Naive thymus-derived CD4-positive, alpha-beta T cell (primary cell): ENCODE measurements at regions of chr7 and their contacts with region 1.

Region 1: GRCh38 chr7:105336009-105336408 is 52.7 kb downstream of the SRPK2 start:
- DNase-seq: peak in 3 of 9 donors; percentile 17 to 31 (median 17)
- ATAC-seq: no peak
- H3K4me3 ChIP-seq: no peak overlapping the region
- H3K4me3 Mint-ChIP-seq: no peak overlapping the region
- H3K27ac ChIP-seq: no peak overlapping the region
- H3K27ac Mint-ChIP-seq: no peak overlapping the region
- H3K4me1 ChIP-seq: peaks cover 0 to 6% of the 10 kb centered on the region in 2 donors
- H3K4me1 Mint-ChIP-seq: peaks cover 10 to 45% (median 30%) of the 10 kb centered on the region in 7 donors
- H3K27me3 ChIP-seq: no peaks in the 10 kb centered on the region
- H3K27me3 Mint-ChIP-seq: no peaks in the 10 kb centered on the region

Region 2: GRCh38 chr7:104900525-104901239 is 435.3 kb before region 1 on chr7:
- CTCF ChIA-PET with region 1: no interaction called
- POLR2A ChIA-PET with region 1: no interaction called
- intact Hi-C with region 1: no loop called
- DNase-seq: no peak
- ATAC-seq: no peak
- H3K4me3 ChIP-seq: no peak overlapping the region
- H3K4me3 Mint-ChIP-seq: no peak overlapping the region
- H3K27ac ChIP-seq: no peak overlapping the region
- H3K27ac Mint-ChIP-seq: no peak overlapping the region
- H3K4me1 ChIP-seq: no peaks in the 10 kb centered on the region
- H3K4me1 Mint-ChIP-seq: peaks cover 4 to 11% (median 7%) of the 10 kb centered on the region in 7 donors
- H3K27me3 ChIP-seq: no peaks in the 10 kb centered on the region
- H3K27me3 Mint-ChIP-seq: peaks cover 0 to 12% (median 5%) of the 10 kb centered on the region in 5 donors

Region 3: DNA sequence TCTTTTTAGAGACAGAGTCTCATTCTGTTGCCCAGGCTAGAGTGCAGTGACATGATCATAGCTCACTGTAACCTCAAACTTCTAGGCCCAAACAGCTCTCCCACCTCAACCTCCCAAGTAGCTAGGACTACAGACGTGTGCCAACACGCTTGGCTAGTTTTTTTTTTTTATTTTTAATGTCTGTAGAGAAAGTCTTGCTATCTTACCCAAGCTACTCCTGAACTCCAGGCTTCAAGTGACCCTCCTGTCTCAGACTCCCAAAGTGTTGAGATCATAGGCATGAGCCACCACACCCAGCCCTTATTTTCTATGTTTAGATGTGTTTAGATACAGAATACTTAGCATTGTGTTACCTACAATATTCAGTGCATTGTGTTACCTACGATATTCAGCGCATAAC is 275.6 kb before region 1 on chr7:
- CTCF ChIA-PET with region 1: no interaction called
- POLR2A ChIA-PET with region 1: no interaction called
- intact Hi-C with region 1: loop called in 1 of 2 experiments (anchors 10 kb)
- DNase-seq: no peak
- ATAC-seq: no peak
- H3K4me3 ChIP-seq: no peak overlapping the region
- H3K4me3 Mint-ChIP-seq: no peak overlapping the region
- H3K27ac ChIP-seq: no peak overlapping the region
- H3K27ac Mint-ChIP-seq: peak overlapping the region in 6 of 9 donors; percentile 12 to 85 (median 75)
- H3K4me1 ChIP-seq: peaks cover 4 to 11% of the 10 kb centered on the region in 2 donors
- H3K4me1 Mint-ChIP-seq: peaks cover 37 to 90% (median 81%) of the 10 kb centered on the region in 7 donors
- H3K27me3 ChIP-seq: no peaks in the 10 kb centered on the region
- H3K27me3 Mint-ChIP-seq: no peaks in the 10 kb centered on the region

Region 4: DNA sequence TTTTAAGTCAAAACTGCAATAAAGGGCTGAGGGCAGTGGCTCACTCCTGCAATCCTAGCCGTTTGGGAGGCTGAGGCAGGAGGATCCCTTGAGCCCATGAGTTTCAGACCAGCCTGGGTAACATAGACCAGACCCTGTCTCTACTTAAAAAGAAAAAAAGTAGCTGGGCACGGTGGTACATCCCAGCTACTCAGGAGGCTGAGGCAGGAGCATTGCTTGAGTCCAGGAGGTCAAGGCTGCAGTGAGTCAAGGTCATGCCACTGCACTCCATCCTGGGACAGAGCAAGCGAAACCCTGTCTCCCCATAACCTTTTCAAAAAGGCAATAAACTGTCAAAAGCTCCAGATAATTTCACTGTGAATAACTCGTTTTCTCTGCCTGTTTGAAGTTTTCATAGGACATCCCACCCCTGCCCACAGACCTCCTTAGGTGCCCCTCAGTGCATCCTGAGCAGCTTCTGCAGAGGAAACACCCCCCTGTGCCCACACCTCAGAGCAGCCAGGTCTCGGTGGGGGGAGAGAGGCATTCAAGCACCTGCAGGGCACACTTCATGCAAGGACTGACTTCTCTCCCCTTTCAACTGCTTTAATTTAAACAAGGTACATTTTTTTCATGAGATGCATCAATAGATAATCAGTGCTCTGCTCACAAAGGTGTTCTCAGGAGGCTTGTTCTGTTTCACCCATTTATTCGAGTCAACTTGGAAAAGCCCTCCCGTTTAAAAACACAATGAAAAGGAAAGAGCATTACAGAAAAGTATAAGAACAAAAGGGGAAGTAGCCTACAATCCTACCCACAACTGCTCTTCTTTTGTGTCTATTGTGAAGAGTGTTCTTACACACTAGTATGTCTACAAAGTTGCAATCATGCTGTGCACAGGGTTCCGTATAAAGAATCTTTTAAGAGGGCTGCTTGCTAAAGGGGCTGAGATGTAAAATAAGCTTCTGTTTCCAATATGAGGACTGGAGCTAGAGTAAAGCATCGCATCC is 217.1 kb before region 1 on chr7:
- CTCF ChIA-PET with region 1: interaction called, 3 read pairs
- POLR2A ChIA-PET with region 1: no interaction called
- intact Hi-C with region 1: loop called in 1 of 2 experiments (anchors 10 kb)
- DNase-seq: no peak
- ATAC-seq: no peak
- H3K4me3 ChIP-seq: no peak overlapping the region
- H3K4me3 Mint-ChIP-seq: peak overlapping the region in 4 of 10 donors; percentile 23 to 39 (median 34)
- H3K27ac ChIP-seq: peak overlapping the region; percentile 40
- H3K27ac Mint-ChIP-seq: peak overlapping the region; percentile 53 to 90 (median 86)
- H3K4me1 ChIP-seq: no peaks in the 10 kb centered on the region
- H3K4me1 Mint-ChIP-seq: peaks cover 5 to 51% (median 32%) of the 10 kb centered on the region in 7 donors
- H3K27me3 ChIP-seq: no peaks in the 10 kb centered on the region
- H3K27me3 Mint-ChIP-seq: no peaks in the 10 kb centered on the region

Region 5: GRCh38 chr7:105156731-105157130 is 179.3 kb before region 1 on chr7:
- CTCF ChIA-PET with region 1: interaction called, 4 read pairs
- POLR2A ChIA-PET with region 1: no interaction called
- intact Hi-C with region 1: loop called (anchors 1 kb)
- DNase-seq: no peak
- ATAC-seq: no peak
- H3K4me3 ChIP-seq: no peak overlapping the region
- H3K4me3 Mint-ChIP-seq: no peak overlapping the region
- H3K27ac ChIP-seq: no peak overlapping the region
- H3K27ac Mint-ChIP-seq: peak overlapping the region in 2 of 9 donors; percentile 14
- H3K4me1 ChIP-seq: no peaks in the 10 kb centered on the region
- H3K4me1 Mint-ChIP-seq: peaks cover 2 to 9% (median 4%) of the 10 kb centered on the region in 7 donors
- H3K27me3 ChIP-seq: no peaks in the 10 kb centered on the region
- H3K27me3 Mint-ChIP-seq: no peaks in the 10 kb centered on the region

Region 6: GRCh38 chr7:105388373-105389087 is 52.5 kb after region 1 on chr7 and contains the start of gene SRPK2:
- CTCF ChIA-PET with region 1: interaction called, 3 read pairs
- POLR2A ChIA-PET with region 1: no interaction called
- intact Hi-C with region 1: loop called in 1 of 2 experiments (anchors 10 kb)
- DNase-seq: peak; percentile 61 to 79 (median 73)
- ATAC-seq: peak; percentile 86
- H3K4me3 ChIP-seq: peak within 1 kb of the TSS; percentile 77
- H3K4me3 Mint-ChIP-seq: peak within 1 kb of the TSS; percentile 91 to 100 (median 98)
- H3K27ac ChIP-seq: peak within 1 kb of the TSS; percentile 82
- H3K27ac Mint-ChIP-seq: peak within 1 kb of the TSS; percentile 90 to 99 (median 95)
- H3K4me1 ChIP-seq: peaks cover 5 to 12% of the 10 kb centered on the region in 2 donors
- H3K4me1 Mint-ChIP-seq: peaks cover 19 to 46% (median 40%) of the 10 kb centered on the region in 7 donors
- H3K27me3 ChIP-seq: no peaks in the 10 kb centered on the region
- H3K27me3 Mint-ChIP-seq: peaks cover 0 to 2% (median 0%) of the 10 kb centered on the region in 5 donors
- total RNA-seq, gene SRPK2: 45.1 to 56.7 (median 46.8) TPM

Region 7: DNA sequence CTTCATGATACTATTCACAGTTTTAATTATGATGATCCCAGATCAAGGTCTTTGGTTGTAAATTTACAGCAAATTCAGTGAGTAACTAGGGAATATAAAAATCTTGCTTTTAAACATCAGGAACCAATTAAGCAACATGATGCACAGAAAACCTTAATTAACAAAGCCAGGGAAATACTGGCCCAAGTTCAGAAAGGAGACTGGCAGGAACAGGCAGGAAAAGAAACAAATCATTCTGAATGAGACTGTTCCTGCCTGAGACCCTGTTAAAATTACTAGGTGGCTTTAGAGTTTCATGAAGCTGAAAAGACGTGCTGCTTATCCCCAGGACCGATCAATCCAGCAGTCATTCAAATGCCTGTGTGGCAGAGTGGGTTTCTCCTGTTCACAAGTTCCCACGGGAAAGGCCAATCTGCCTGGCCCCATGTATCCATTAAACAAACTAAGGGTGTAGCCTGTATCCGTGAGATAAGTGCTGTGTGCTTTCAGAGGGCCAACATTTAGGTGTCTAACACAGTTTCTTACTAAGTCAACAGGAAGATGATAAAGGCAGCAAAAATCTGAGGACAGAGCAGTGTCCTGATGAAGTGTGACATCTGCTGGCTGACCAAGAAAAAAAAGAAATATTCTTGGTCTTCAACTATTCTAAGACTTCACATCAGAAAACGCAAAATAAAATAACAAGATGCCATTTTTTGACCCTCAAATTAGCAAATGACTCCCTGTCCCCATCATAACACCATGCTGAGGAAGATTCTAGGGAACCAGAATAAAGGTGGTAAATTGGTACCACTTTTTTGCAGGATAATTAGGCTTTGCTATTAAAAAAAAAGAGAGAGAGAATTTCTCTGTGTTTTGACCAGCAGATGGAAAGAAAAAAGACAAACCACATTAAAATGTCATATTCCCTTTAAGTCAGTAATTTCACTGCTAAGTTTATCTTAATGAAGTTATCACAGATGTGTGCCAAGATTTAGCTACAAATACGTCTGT is 151.9 kb after region 1 on chr7:
- CTCF ChIA-PET with region 1: no interaction called
- POLR2A ChIA-PET with region 1: no interaction called
- intact Hi-C with region 1: loop called in 1 of 2 experiments (anchors 5 kb)
- DNase-seq: peak in 4 of 9 donors; percentile 4 to 31 (median 19)
- ATAC-seq: no peak
- H3K4me3 ChIP-seq: no peak overlapping the region
- H3K4me3 Mint-ChIP-seq: no peak overlapping the region
- H3K27ac ChIP-seq: no peak overlapping the region
- H3K27ac Mint-ChIP-seq: peak overlapping the region in 1 of 9 donors; percentile 20
- H3K4me1 ChIP-seq: no peaks in the 10 kb centered on the region
- H3K4me1 Mint-ChIP-seq: peaks cover 0 to 8% (median 0%) of the 10 kb centered on the region in 7 donors
- H3K27me3 ChIP-seq: no peaks in the 10 kb centered on the region
- H3K27me3 Mint-ChIP-seq: no peaks in the 10 kb centered on the region

Region 8: DNA sequence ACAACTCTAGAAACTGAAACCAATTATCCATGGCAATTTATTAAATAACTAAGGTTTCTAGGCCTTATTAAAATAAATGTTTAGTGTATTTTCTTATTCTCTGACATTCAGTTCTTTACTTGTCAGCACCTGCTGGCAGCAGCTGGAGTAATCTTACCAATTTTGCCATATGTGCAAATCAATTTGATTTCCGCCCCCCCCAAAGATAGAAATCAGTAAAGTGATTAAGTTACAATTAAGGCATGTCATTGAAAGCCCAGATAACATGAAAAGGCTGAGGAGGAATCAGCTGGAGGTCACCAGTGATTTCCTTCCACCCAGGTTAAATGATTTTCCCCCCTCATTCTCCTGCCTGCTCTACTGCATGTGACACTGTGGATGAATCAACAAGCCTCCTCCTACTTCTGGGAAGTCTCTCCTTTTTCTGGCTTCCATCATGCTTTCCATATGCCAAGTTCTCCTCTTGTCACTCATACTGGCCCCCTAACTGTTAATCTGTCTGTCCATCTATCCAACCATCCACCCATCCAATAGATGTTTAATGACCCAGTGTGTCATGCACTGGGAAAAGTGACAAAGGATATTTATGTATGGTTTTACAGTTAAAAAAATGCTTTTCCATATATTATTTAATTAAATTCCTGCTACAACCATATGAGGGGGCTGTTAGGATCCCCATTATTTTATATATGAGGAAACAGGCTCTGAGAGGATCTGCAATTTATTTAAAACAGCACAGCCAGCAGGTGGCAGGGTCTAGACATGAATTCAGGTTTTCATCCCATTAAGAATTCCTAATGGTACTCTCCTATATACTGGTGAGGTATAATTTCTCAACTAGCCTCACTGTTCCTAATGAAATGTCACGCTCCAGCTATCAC is 423.9 kb after region 1 on chr7:
- CTCF ChIA-PET with region 1: no interaction called
- POLR2A ChIA-PET with region 1: no interaction called
- intact Hi-C with region 1: no loop called
- DNase-seq: peak in 2 of 9 donors; percentile 21 to 24
- ATAC-seq: peak; percentile 52
- H3K4me3 ChIP-seq: no peak overlapping the region
- H3K4me3 Mint-ChIP-seq: peak overlapping the region in 8 of 10 donors; percentile 1 to 82 (median 54)
- H3K27ac ChIP-seq: no peak overlapping the region
- H3K27ac Mint-ChIP-seq: peak overlapping the region in 8 of 9 donors; percentile 32 to 90 (median 76)
- H3K4me1 ChIP-seq: peaks cover 31 to 32% of the 10 kb centered on the region in 2 donors
- H3K4me1 Mint-ChIP-seq: peaks cover 22 to 53% (median 43%) of the 10 kb centered on the region in 7 donors
- H3K27me3 ChIP-seq: no peaks in the 10 kb centered on the region
- H3K27me3 Mint-ChIP-seq: peaks cover 0 to 11% (median 0%) of the 10 kb centered on the region in 5 donors